ENCODE measurements at regions of chr5 and their contacts with region 1.

Region 1: GRCh38 chr5:76771705-76772405 is 47.0 kb upstream of the F2RL1 start:
- DNase-seq: no peak
- ATAC-seq: no peak
- H3K4me3 Mint-ChIP-seq: no peak overlapping the region
- H3K27ac Mint-ChIP-seq: no peak overlapping the region
- H3K4me1 Mint-ChIP-seq: peaks cover 2% of the 10 kb centered on the region
- H3K27me3 Mint-ChIP-seq: no peaks in the 10 kb centered on the region
- CTCF ChIP-seq: no peak

Region 2: GRCh38 chr5:76290321-76290757 is 481.5 kb before region 1 on chr5:
- CTCF ChIA-PET with region 1: no interaction called
- POLR2A ChIA-PET with region 1: no interaction called
- intact Hi-C with region 1: no loop called
- DNase-seq: no peak
- ATAC-seq: no peak
- H3K4me3 Mint-ChIP-seq: no peak overlapping the region
- H3K27ac Mint-ChIP-seq: no peak overlapping the region
- H3K4me1 Mint-ChIP-seq: peaks cover 2% of the 10 kb centered on the region
- H3K27me3 Mint-ChIP-seq: no peaks in the 10 kb centered on the region
- CTCF ChIP-seq: no peak

Region 3: GRCh38 chr5:76608833-76609232 is 163.0 kb before region 1 on chr5:
- CTCF ChIA-PET with region 1: interaction called, 122 read pairs
- POLR2A ChIA-PET with region 1: no interaction called
- intact Hi-C with region 1: no loop called
- DNase-seq: peak; percentile 8
- ATAC-seq: peak; percentile 64
- H3K4me3 Mint-ChIP-seq: no peak overlapping the region
- H3K27ac Mint-ChIP-seq: no peak overlapping the region
- H3K4me1 Mint-ChIP-seq: peaks cover 11% of the 10 kb centered on the region
- H3K27me3 Mint-ChIP-seq: no peaks in the 10 kb centered on the region
- CTCF ChIP-seq: no peak

Region 4: DNA sequence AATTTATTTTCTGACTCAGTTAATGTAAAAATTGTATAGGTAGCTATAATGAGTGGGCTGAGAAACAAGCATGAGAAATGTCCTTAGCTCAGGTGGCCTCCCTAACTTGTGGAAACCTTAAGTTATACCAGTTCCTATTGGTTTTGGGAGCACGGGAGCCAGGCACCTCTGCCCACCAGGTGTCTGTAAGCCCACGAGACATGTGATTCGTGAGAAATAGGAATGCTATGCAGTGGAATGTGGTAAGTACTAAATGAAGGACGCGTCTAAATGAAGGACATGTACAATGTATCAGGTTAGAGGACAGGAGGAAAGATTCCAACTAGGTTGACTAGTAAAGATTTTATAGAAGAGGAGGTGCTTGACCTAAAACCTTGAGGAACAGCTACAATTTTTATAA is 102.6 kb before region 1 on chr5:
- CTCF ChIA-PET with region 1: interaction called, 14 read pairs
- POLR2A ChIA-PET with region 1: no interaction called
- intact Hi-C with region 1: no loop called
- DNase-seq: no peak
- ATAC-seq: no peak
- H3K4me3 Mint-ChIP-seq: no peak overlapping the region
- H3K27ac Mint-ChIP-seq: no peak overlapping the region
- H3K4me1 Mint-ChIP-seq: no peaks in the 10 kb centered on the region
- H3K27me3 Mint-ChIP-seq: no peaks in the 10 kb centered on the region
- CTCF ChIP-seq: no peak

Region 5: DNA sequence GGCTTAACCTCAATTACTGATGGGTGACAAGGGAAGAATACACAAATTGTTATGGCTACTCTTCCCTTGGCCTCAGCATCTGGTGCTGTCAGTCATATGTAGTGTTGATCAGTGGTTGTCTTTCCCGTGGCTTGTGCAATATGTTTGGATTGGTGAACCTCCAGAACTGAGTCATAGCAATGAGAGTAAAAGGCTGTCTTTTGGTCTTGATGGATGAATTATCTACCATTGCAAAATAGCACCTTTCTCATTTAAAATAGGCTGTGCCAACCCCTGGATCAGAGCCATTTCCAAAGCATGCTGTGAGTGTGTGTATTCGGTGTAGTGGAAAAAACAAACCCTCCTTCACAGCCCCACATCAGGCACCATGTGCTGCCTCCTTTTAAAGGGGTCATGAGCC is 70.6 kb before region 1 on chr5:
- CTCF ChIA-PET with region 1: interaction called, 20 read pairs
- POLR2A ChIA-PET with region 1: interaction called, 4 read pairs
- intact Hi-C with region 1: no loop called
- DNase-seq: no peak
- ATAC-seq: no peak
- H3K4me3 Mint-ChIP-seq: no peak overlapping the region
- H3K27ac Mint-ChIP-seq: no peak overlapping the region
- H3K4me1 Mint-ChIP-seq: no peaks in the 10 kb centered on the region
- H3K27me3 Mint-ChIP-seq: no peaks in the 10 kb centered on the region
- CTCF ChIP-seq: no peak

Region 6: GRCh38 chr5:76733049-76733417 is 38.8 kb before region 1 on chr5:
- CTCF ChIA-PET with region 1: interaction called, 15 read pairs
- POLR2A ChIA-PET with region 1: no interaction called
- intact Hi-C with region 1: loop called (anchors 5 kb)
- DNase-seq: peak; percentile 72
- ATAC-seq: peak; percentile 85
- H3K4me3 Mint-ChIP-seq: peak overlapping the region; percentile 44
- H3K27ac Mint-ChIP-seq: peak overlapping the region; percentile 69
- H3K4me1 Mint-ChIP-seq: peaks cover 20% of the 10 kb centered on the region
- H3K27me3 Mint-ChIP-seq: peaks cover 2% of the 10 kb centered on the region
- CTCF ChIP-seq: no peak

Region 7: GRCh38 chr5:76790632-76791290 is 18.9 kb after region 1 on chr5:
- CTCF ChIA-PET with region 1: interaction called, 25 read pairs
- POLR2A ChIA-PET with region 1: no interaction called
- intact Hi-C with region 1: no loop called
- DNase-seq: peak; percentile 3
- ATAC-seq: peak; percentile 83
- H3K4me3 Mint-ChIP-seq: no peak overlapping the region
- H3K27ac Mint-ChIP-seq: peak overlapping the region; percentile 52
- H3K4me1 Mint-ChIP-seq: peaks cover 13% of the 10 kb centered on the region
- H3K27me3 Mint-ChIP-seq: no peaks in the 10 kb centered on the region
- CTCF ChIP-seq: no peak